ENCODE measurements at regions of chr6 and their contacts with region 1.

Region 1: GRCh38 chr6:139161817-139162284 is 27.0 kb downstream of the HECA start:
- DNase-seq: peak; percentile 72
- H3K4me3 Mint-ChIP-seq: peak overlapping the region; percentile 68
- H3K27ac Mint-ChIP-seq: peak overlapping the region; percentile 97
- H3K4me1 Mint-ChIP-seq: peaks cover 71% of the 10 kb centered on the region
- H3K27me3 Mint-ChIP-seq: no peaks in the 10 kb centered on the region

Region 2: GRCh38 chr6:139099984-139100383 is 61.9 kb before region 1 on chr6:
- intact Hi-C with region 1: loop called (anchors 2 kb)
- DNase-seq: no peak
- H3K4me3 Mint-ChIP-seq: no peak overlapping the region
- H3K27ac Mint-ChIP-seq: peak overlapping the region; percentile 65
- H3K4me1 Mint-ChIP-seq: peaks cover 20% of the 10 kb centered on the region
- H3K27me3 Mint-ChIP-seq: no peaks in the 10 kb centered on the region

Region 3: GRCh38 chr6:139134817-139135581 is 26.9 kb before region 1 on chr6 and contains the start of gene HECA:
- intact Hi-C with region 1: loop called (anchors 1 kb)
- DNase-seq: peak; percentile 97
- H3K4me3 Mint-ChIP-seq: peak within 1 kb of the TSS; percentile 85
- H3K27ac Mint-ChIP-seq: peak within 1 kb of the TSS; percentile 84
- H3K4me1 Mint-ChIP-seq: peaks cover 72% of the 10 kb centered on the region
- H3K27me3 Mint-ChIP-seq: no peaks in the 10 kb centered on the region
- total RNA-seq, gene HECA: 49.1 and 49.9 TPM in 2 replicates

Region 4: GRCh38 chr6:139146317-139146726 is 15.5 kb before region 1 on chr6:
- intact Hi-C with region 1: loop called (anchors 1 kb)
- DNase-seq: no peak
- H3K4me3 Mint-ChIP-seq: peak overlapping the region; percentile 65
- H3K27ac Mint-ChIP-seq: peak overlapping the region; percentile 85
- H3K4me1 Mint-ChIP-seq: peaks cover 92% of the 10 kb centered on the region
- H3K27me3 Mint-ChIP-seq: no peaks in the 10 kb centered on the region

Region 5: DNA sequence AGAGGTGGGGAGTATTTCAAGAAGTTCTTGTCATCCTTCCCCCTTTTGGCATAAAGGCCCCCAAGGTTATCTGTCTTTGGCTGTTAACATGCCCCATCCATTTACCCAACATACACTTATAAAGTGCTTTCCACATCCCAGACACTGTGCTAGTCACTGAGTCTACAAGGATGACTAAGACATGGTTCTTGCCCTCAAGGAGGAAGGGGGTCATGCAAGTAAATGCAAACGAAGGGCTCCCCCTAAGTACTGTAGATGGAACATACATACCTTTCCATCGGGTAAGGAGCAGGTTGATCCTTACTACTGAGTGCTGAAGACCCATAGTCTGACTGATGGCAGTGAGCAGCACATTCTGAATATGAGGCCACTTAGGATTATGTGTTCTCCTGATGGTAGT is 11.3 kb after region 1 on chr6:
- intact Hi-C with region 1: loop called (anchors 1 kb)
- DNase-seq: no peak
- H3K4me3 Mint-ChIP-seq: no peak overlapping the region
- H3K27ac Mint-ChIP-seq: peak overlapping the region; percentile 82
- H3K4me1 Mint-ChIP-seq: peaks cover 82% of the 10 kb centered on the region
- H3K27me3 Mint-ChIP-seq: no peaks in the 10 kb centered on the region

Region 6: DNA sequence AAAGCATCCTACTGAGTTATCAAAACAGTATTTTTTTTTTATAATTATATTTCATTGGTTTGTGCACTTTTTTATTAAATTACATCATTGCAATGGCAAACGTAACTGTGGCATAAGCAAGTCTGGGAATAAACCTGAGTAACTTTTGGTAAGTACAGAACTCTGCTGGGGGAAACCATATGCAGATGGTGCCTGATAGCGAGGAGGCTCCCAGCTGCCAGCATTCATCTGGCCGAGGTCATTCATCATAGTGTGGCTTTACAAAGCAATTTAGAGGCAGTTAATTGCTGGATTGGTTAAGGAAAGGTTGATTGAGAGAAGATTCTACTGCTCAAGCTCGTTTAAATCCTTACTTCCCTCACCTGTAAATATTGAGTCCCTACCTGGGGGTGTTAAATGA is 25.6 kb after region 1 on chr6:
- intact Hi-C with region 1: loop called (anchors 1 kb)
- DNase-seq: no peak
- H3K4me3 Mint-ChIP-seq: no peak overlapping the region
- H3K27ac Mint-ChIP-seq: no peak overlapping the region
- H3K4me1 Mint-ChIP-seq: peaks cover 29% of the 10 kb centered on the region
- H3K27me3 Mint-ChIP-seq: no peaks in the 10 kb centered on the region

Region 7: GRCh38 chr6:139250296-139251044 is 88.6 kb after region 1 on chr6:
- intact Hi-C with region 1: loop called (anchors 1 kb)
- DNase-seq: peak; percentile 43
- H3K4me3 Mint-ChIP-seq: peak overlapping the region; percentile 43
- H3K27ac Mint-ChIP-seq: peak overlapping the region; percentile 91
- H3K4me1 Mint-ChIP-seq: peaks cover 45% of the 10 kb centered on the region
- H3K27me3 Mint-ChIP-seq: no peaks in the 10 kb centered on the region